Activated CD4-positive, alpha-beta T cell treated with anti-CD3 and anti-CD28 coated beads for 36 hours (primary cell): ENCODE measurements at regions of chrX and their contacts with region 1.

Region 1: DNA sequence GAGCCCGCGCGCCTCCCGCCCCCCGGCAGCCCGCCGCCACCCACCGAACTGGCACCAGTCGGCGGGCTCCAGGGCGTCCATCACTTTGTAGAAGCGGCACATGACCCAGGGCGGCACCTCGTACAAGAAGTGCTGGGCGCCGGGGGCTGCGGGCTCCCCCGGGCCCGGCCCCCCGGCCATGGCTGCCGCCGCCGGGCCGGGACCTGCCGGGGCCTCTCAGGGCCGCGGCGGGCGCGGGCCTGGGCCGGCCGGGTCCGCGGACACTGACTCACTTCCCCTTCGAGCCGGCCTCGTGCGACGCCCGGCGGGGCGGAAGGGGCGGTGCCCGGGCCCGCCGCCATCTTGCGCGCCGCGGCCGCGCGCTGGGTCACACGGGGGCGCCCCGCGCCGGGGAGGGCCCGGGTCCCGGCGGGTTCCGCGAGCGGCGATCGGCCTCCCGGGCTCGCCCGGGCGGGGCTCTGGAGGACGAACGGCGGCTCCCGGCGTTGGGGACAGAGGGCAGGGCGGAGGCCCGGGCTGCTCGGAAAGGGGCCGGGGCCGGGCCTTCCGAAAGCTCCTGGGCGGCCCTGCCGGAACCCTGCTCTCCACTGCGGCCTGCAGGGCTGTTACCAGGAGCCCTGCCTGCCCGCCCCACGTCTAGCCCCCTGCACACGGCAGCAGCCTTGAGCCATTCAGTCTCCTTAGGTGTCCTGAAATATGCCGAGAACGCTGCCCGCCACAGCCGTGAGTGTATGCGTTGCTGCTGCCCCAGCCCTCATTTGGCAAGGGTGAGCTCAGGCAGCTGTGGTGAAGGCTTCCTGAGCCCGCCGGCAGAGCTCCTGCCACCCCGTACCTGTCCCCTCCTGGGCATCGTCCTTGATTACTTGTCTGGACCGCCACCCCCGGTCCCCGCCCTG is at the start of gene IRAK1:
- DNase-seq: peak; percentile 73
- ATAC-seq: peak; percentile 61
- H3K4me3 Mint-ChIP-seq: peak within 1 kb of the TSS; percentile 87
- H3K27ac Mint-ChIP-seq: peak within 1 kb of the TSS; percentile 90
- H3K4me1 Mint-ChIP-seq: peaks cover 14% of the 10 kb centered on the region
- H3K27me3 Mint-ChIP-seq: no peaks in the 10 kb centered on the region
- total RNA-seq, gene IRAK1: 84.3 to 93.6 TPM

Region 2: DNA sequence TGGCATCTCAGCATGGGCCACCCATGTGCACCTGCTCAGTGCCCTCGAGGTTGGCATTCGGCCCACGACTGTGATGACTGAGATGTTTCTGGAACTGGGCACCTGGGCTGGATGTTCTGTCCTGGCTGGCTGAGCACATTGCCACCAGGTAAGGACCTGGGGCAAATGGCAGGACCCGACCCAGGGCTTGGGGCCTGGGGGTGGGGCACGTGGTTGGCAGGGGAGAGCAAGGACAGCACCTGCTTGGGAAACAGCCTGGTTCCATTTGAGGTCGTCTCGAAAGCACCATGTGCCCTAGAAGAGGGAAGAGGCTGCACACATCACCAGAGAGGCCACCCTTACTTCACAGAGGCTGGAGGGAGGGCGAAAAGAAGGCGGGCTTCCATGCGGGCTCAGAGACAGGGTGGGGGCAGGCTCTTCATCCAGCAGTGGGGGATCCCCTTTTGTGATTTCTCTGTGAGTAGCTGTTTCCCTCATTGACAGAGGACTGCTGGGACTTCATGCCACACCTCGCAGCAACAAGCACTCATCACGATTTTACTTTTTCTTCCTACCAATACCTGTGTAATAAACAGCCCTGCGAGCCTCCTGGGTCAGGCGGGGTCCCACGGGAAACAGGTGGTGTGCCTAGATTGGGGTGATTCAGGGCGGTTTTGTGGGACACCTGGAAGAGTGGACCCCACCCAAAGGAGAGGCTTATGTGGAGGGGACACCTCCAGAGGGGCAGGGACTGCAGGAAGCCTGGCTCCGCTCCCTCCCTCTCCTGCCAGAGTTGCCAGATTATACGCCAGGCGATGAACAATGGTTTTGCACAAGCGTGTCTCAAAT is 35.3 kb before region 1 on chrX:
- CTCF ChIA-PET with region 1: interaction called, 3 read pairs
- POLR2A ChIA-PET with region 1: no interaction called
- intact Hi-C with region 1: loop called in 1 of 2 experiments (anchors 2 kb)
- DNase-seq: peak; percentile 80
- ATAC-seq: peak; percentile 64
- H3K4me3 Mint-ChIP-seq: peak overlapping the region; percentile 78
- H3K27ac Mint-ChIP-seq: peak overlapping the region; percentile 99
- H3K4me1 Mint-ChIP-seq: peaks cover 49% of the 10 kb centered on the region
- H3K27me3 Mint-ChIP-seq: no peaks in the 10 kb centered on the region

Region 3: DNA sequence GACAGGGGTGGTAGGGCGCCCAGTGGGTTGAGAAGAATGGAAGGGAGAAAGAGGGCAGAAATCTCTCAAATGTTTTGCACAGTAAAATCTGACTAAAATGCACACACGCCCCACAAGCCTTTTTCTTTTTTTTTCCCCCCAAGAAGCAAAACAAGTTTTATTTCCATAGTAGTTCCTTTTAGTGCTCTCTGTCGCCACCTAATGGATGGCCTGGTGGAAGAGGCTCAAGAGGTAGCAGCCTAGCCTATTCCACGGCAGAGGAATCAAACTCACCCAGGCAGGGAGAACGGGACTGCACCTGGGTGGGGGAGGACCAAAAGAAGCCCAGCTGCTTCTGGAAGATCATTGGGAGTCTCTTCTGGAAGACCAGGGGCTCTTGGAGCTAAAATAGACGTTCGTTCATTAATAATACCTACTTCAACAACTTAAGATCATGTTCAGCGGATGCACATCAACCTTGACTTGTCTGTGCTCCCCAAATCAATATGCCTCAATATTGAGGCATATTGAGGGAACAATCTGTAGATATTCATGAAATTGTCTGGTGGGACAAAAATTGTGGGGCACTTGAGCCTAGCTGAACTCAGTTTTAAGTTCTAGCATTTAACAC is 31.4 kb after region 1 on chrX:
- CTCF ChIA-PET with region 1: interaction called, 3 read pairs
- POLR2A ChIA-PET with region 1: no interaction called
- intact Hi-C with region 1: loop called in 1 of 2 experiments (anchors 2 kb)
- DNase-seq: peak; percentile 81
- ATAC-seq: peak; percentile 85
- H3K4me3 Mint-ChIP-seq: no peak overlapping the region
- H3K27ac Mint-ChIP-seq: peak overlapping the region; percentile 40
- H3K4me1 Mint-ChIP-seq: peaks cover 33% of the 10 kb centered on the region
- H3K27me3 Mint-ChIP-seq: no peaks in the 10 kb centered on the region

Region 4: GRCh38 chrX:154378782-154379591 is 359.1 kb after region 1 on chrX and contains the start of gene EMD:
- CTCF ChIA-PET with region 1: no interaction called
- POLR2A ChIA-PET with region 1: no interaction called
- intact Hi-C with region 1: loop called in 1 of 2 experiments (anchors 10 kb)
- DNase-seq: peak; percentile 98
- ATAC-seq: peak; percentile 88
- H3K4me3 Mint-ChIP-seq: peak within 1 kb of the TSS; percentile 84
- H3K27ac Mint-ChIP-seq: peak within 1 kb of the TSS; percentile 91
- H3K4me1 Mint-ChIP-seq: peaks cover 23% of the 10 kb centered on the region
- H3K27me3 Mint-ChIP-seq: no peaks in the 10 kb centered on the region
- total RNA-seq, gene EMD: 75.9 to 89.4 TPM

Region 5: GRCh38 chrX:154428176-154429010 is 408.5 kb after region 1 on chrX and contains the start of gene ATP6AP1:
- CTCF ChIA-PET with region 1: no interaction called
- POLR2A ChIA-PET with region 1: no interaction called
- intact Hi-C with region 1: no loop called
- DNase-seq: peak; percentile 94
- ATAC-seq: peak; percentile 99
- H3K4me3 Mint-ChIP-seq: peak within 1 kb of the TSS; percentile 77
- H3K27ac Mint-ChIP-seq: peak within 1 kb of the TSS; percentile 65
- H3K4me1 Mint-ChIP-seq: peaks cover 26% of the 10 kb centered on the region
- H3K27me3 Mint-ChIP-seq: no peaks in the 10 kb centered on the region
- total RNA-seq, gene ATP6AP1: 25.6 to 28.6 TPM